Activated CD4-positive, alpha-beta T cell treated with anti-CD3 and anti-CD28 coated beads for 36 hours (primary cell): ENCODE measurements at regions of chr1 and their contacts with region 1.

Region 1: GRCh38 chr1:94039514-94039870 is 81.5 kb downstream of the ABCA4 start:
- DNase-seq: peak; percentile 82
- ATAC-seq: no peak
- H3K4me3 Mint-ChIP-seq: no peak overlapping the region
- H3K27ac Mint-ChIP-seq: no peak overlapping the region
- H3K4me1 Mint-ChIP-seq: peaks cover 26% of the 10 kb centered on the region
- H3K27me3 Mint-ChIP-seq: peaks cover 30% of the 10 kb centered on the region

Region 2: GRCh38 chr1:93909146-93910050 is 130.1 kb before region 1 on chr1 and contains the start of gene GCLM:
- CTCF ChIA-PET with region 1: no interaction called
- POLR2A ChIA-PET with region 1: interaction called, 5 read pairs
- intact Hi-C with region 1: loop called in 1 of 2 experiments (anchors 5 kb)
- DNase-seq: peak; percentile 93
- ATAC-seq: peak; percentile 84
- H3K4me3 Mint-ChIP-seq: peak within 1 kb of the TSS; percentile 96
- H3K27ac Mint-ChIP-seq: peak within 1 kb of the TSS; percentile 97
- H3K4me1 Mint-ChIP-seq: peaks cover 34% of the 10 kb centered on the region
- H3K27me3 Mint-ChIP-seq: peaks cover 5% of the 10 kb centered on the region
- total RNA-seq, gene GCLM: 12.8 to 19.2 TPM

Region 3: DNA sequence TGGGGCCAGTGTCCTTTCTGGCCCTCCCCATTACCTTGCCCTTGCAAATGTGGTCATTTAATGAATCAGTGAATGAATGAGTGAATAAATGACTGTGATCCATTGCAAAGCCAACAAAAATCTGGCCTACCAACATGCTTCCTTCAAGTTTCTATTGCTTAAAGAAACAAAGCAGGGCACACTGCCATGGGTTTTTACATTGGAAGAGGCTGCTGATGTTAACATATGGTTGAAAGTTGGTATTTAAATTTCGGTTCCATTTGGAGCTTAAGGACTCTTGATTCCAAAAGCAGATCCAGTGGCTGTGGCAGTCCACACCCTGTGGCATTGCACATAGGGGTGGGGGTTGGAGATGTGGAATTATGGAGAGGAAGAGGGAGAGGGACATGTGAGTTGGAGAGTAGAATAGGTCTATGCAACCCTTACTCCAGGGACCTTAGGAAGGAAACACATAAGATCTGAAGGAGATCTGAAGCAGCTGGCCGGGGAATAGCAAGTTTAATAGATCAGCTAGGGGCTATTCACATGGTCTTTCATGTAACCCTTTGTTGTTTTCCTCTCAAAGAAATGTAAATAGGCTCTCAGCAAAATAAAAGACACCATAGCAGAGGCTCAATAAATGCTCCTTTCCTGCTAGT is 74.2 kb after region 1 on chr1:
- CTCF ChIA-PET with region 1: no interaction called
- POLR2A ChIA-PET with region 1: no interaction called
- intact Hi-C with region 1: no loop called
- DNase-seq: no peak
- ATAC-seq: no peak
- H3K4me3 Mint-ChIP-seq: no peak overlapping the region
- H3K27ac Mint-ChIP-seq: no peak overlapping the region
- H3K4me1 Mint-ChIP-seq: no peaks in the 10 kb centered on the region
- H3K27me3 Mint-ChIP-seq: no peaks in the 10 kb centered on the region

Region 4: DNA sequence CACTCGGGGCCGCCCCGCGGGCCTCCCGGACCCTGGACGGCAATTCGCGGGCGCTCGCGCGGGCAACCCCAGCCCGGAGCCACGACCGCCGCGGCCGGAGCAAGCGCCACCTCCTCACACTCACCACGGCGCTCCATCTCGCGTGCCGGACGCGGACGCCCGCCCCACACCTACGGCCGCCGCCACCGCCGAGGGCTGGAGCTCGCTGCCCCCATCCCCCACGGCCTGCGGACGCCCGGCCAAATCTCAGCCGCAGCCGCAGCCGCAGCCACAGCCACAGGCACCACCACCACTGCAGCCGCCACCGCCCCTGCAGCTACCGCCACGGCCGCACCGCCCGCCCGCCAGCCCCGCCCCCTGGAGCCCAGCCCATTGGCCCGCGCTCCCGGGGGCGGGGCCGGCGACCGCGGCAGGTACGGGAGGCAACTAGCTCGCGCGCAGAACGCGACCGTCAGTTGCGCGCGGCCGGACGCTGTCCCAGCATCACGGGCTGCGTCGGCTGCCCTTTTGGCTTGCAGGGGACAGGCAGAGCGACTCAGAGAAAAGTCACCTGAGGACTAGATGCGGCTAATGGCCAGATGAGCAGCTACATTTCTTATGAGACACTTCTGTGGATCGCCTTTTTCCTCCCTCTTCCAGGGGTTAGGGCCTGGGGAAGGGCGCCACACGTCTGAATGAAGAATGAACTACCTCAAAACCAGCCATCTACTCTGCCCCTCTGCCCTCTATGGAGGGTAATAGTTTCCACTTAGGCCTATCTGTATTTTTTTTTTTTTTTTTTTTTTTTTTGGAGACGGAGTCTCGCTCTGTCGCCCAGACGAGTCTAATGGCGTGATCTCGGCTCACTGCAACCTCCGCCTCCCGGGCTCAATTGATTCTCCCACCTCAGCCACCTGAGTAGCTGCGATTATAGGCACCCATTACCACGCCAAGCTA is 198.1 kb after region 1 on chr1 and contains the start of gene ARHGAP29:
- CTCF ChIA-PET with region 1: no interaction called
- POLR2A ChIA-PET with region 1: no interaction called
- intact Hi-C with region 1: loop called (anchors 5 kb)
- DNase-seq: peak; percentile 84
- ATAC-seq: peak; percentile 97
- H3K4me3 Mint-ChIP-seq: peak within 1 kb of the TSS; percentile 56
- H3K27ac Mint-ChIP-seq: no peak within 1 kb of the TSS
- H3K4me1 Mint-ChIP-seq: peaks cover 13% of the 10 kb centered on the region
- H3K27me3 Mint-ChIP-seq: peaks cover 70% of the 10 kb centered on the region
- total RNA-seq, gene ARHGAP29: 0.21 to 0.23 TPM

Region 5: DNA sequence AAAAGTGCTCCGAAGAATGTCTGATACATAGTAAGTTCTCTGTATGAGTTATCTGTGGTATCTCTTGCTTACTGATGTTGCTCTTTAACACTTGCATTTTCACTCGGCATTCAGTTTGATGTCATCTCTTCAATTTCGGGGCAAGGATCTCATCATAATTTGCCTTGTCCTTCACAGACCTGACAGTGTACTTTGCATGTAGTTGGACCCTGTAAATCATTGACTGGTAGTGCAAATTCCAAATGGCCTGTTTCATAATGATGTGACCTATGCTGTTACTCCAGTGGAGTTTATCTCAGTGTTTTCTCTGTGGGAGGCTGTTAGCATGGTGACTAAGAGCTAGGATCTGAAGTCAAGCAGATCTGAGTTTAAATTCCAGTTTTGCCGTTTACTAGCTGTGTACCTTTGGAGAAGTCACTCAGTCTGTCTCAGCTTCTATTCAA is 344.5 kb after region 1 on chr1:
- CTCF ChIA-PET with region 1: interaction called, 3 read pairs
- POLR2A ChIA-PET with region 1: no interaction called
- intact Hi-C with region 1: loop called in 1 of 2 experiments (anchors 1 kb)
- DNase-seq: peak; percentile 22
- ATAC-seq: peak; percentile 76
- H3K4me3 Mint-ChIP-seq: peak overlapping the region; percentile 61
- H3K27ac Mint-ChIP-seq: peak overlapping the region; percentile 92
- H3K4me1 Mint-ChIP-seq: peaks cover 62% of the 10 kb centered on the region
- H3K27me3 Mint-ChIP-seq: no peaks in the 10 kb centered on the region

Region 6: DNA sequence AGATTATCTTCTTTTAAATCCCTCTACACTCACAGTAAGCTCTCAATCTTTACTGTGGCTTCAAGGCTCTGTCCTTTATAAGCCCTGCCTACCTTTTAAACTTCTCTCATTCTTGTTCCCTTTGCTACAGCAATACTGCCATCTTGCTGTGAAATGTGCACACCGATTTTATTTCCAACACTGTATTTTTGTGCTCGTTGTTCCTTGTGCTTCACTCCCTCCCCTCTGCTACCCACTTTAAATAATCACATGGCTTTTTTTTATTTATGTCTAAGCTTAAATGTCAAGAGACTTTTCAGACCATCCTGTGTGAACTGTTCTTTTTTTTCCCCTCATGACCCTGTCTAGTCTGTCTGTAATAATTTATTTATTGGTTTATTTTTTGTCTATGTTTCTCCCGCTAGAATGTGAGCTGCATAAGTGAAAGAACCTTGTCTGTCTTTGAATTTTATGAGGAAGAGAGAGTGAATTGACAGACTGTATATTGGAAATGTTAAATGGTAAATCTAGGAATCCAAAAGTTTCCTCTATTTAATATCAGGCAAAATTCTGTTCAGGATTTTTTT is 424.4 kb after region 1 on chr1:
- CTCF ChIA-PET with region 1: interaction called, 18 read pairs
- POLR2A ChIA-PET with region 1: no interaction called
- intact Hi-C with region 1: no loop called
- DNase-seq: peak; percentile 13
- ATAC-seq: peak; percentile 61
- H3K4me3 Mint-ChIP-seq: no peak overlapping the region
- H3K27ac Mint-ChIP-seq: no peak overlapping the region
- H3K4me1 Mint-ChIP-seq: peaks cover 4% of the 10 kb centered on the region
- H3K27me3 Mint-ChIP-seq: no peaks in the 10 kb centered on the region